ENCODE measurements at regions of chr7 and their contacts with region 1.

Region 1: GRCh38 chr7:66571568-66571967 is 57.1 kb upstream of the KCTD7 start:
- DNase-seq: no peak
- ATAC-seq: no peak
- H3K4me3 ChIP-seq: no peak overlapping the region
- H3K4me3 Mint-ChIP-seq: no peak overlapping the region
- H3K27ac ChIP-seq: no peak overlapping the region
- H3K27ac Mint-ChIP-seq: no peak overlapping the region
- H3K4me1 ChIP-seq: no peaks in the 10 kb centered on the region
- H3K4me1 Mint-ChIP-seq: peaks cover 12 to 16% of the 10 kb centered on the region in 2 donors
- H3K27me3 ChIP-seq: no peaks in the 10 kb centered on the region
- H3K27me3 Mint-ChIP-seq: no peaks in the 10 kb centered on the region
- CTCF ChIP-seq: no peak

Region 2: GRCh38 chr7:66452165-66452564 is 119.4 kb before region 1 on chr7:
- intact Hi-C with region 1: loop called (anchors 5 kb)
- DNase-seq: no peak
- ATAC-seq: no peak
- H3K4me3 ChIP-seq: no peak overlapping the region
- H3K4me3 Mint-ChIP-seq: no peak overlapping the region
- H3K27ac ChIP-seq: no peak overlapping the region
- H3K27ac Mint-ChIP-seq: no peak overlapping the region
- H3K4me1 ChIP-seq: no peaks in the 10 kb centered on the region
- H3K4me1 Mint-ChIP-seq: peaks cover 7 to 8% of the 10 kb centered on the region in 2 donors
- H3K27me3 ChIP-seq: no peaks in the 10 kb centered on the region
- H3K27me3 Mint-ChIP-seq: no peaks in the 10 kb centered on the region
- CTCF ChIP-seq: no peak

Region 3: GRCh38 chr7:66731986-66732385 is 160.4 kb after region 1 on chr7:
- intact Hi-C with region 1: no loop called
- DNase-seq: no peak
- ATAC-seq: no peak
- H3K4me3 ChIP-seq: no peak overlapping the region
- H3K4me3 Mint-ChIP-seq: no peak overlapping the region
- H3K27ac ChIP-seq: no peak overlapping the region
- H3K27ac Mint-ChIP-seq: peak overlapping the region in 1 of 2 donors; percentile 40
- H3K4me1 ChIP-seq: peaks cover 2% of the 10 kb centered on the region
- H3K4me1 Mint-ChIP-seq: peaks cover 19 to 33% of the 10 kb centered on the region in 2 donors
- H3K27me3 ChIP-seq: no peaks in the 10 kb centered on the region
- H3K27me3 Mint-ChIP-seq: no peaks in the 10 kb centered on the region
- CTCF ChIP-seq: no peak

Measured in natural killer cell (primary cell).